ENCODE measurements at regions of chr16 and their contacts with region 1.

Region 1: GRCh38 chr16:73113336-73113735 is 65.4 kb upstream of the ZFHX3 start:
- DNase-seq: no peak

Region 2: GRCh38 chr16:73154063-73154870 is 40.9 kb after region 1 on chr16:
- intact Hi-C with region 1: loop called (anchors 5 kb)
- DNase-seq: no peak

Region 3: DNA sequence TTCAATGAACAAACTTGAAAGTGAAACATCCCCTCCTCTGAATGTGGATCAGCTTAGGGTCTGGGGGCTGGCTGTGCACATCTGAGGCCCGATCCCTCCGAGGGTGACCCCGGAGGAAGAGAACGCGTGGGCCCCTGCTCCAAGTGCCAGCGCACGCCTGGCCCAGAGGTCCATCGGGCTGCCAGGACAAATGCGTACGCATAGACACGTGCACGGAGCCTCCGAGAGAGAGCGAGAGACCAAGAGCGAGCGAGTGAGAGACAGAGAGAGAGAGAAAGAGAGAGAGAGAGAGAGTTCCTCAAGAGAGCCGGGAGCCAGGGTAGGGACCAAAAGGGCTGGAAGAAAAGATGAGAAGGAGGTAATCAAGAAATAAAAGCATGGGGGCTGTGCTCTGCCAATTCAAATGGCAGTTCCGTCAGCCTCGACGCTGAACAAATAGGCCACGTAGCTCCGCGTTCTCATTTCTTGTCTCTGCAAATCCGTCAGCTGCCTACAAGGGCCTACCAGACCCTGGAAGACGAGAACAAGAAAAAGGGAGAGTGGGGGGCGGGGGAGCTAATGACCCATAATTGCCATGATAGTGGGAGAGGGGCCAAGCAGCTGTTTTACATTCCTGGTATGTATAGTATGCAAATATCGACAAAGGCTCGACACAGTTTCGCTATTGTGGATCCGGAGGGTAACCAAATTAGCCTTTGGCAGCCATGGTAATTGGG is 369.9 kb after region 1 on chr16:
- intact Hi-C with region 1: no loop called
- DNase-seq: no peak